Psoas muscle (tissue), 8 donors: ENCODE measurements at regions of chr1 and their contacts with region 1.

Region 1: GRCh38 chr1:161098210-161099068 is at the start of gene KLHDC9:
- DNase-seq: peak; percentile 66 to 87
- ATAC-seq: peak; percentile 76 to 91 (median 85)
- H3K4me3 ChIP-seq: peak within 1 kb of the TSS; percentile 76
- H3K27ac ChIP-seq: peak within 1 kb of the TSS; percentile 58
- H3K4me1 ChIP-seq: peaks cover 7% of the 10 kb centered on the region
- H3K27me3 ChIP-seq: no peaks in the 10 kb centered on the region
- CTCF ChIP-seq: no peak
- total RNA-seq, gene KLHDC9: 1.4 to 5.9 (median 3.5) TPM

Region 2: DNA sequence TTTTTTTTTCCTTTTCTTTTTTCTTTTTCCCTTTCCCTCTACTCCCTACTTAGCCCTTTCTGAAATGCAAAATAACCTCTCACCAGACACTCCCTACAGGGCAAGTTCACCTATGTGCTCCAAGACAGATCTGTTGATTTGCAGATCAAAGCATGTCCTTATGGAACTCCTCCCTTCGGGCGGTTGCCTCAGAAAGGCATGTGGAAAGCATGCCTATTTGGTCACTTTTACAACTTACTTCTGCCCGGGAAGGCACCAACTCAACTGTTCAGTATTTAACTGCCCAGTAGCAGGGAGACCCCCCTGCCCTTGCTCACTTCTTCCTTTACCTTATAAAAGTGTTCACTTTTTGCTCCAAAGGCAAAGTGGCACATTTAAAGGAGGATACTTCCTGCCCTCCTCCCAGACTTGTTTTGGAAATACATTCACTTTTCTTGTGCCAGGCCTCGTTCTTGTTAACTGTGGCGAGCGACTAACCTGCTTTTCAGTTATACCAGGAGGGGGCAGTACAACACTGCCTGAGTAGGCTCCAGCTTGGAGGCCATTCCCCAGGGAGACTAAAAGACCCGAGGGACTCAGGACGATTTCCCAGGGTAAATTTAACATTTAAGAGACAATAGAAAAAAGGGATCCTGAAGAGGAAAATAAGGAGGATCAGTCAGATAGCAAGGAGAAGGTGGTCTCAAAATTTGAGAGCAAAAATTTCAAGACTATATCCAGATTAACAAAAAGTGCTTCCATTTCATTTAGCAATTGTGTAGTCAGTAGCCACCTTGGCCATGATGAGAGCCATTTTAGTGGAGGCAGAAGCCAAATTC is 371.7 kb before region 1 on chr1:
- intact Hi-C with region 1: loop called in 1 of 2 experiments (anchors 10 kb)
- DNase-seq: no peak
- ATAC-seq: no peak
- H3K4me3 ChIP-seq: no peak overlapping the region
- H3K27ac ChIP-seq: no peak overlapping the region
- H3K4me1 ChIP-seq: no peaks in the 10 kb centered on the region
- H3K27me3 ChIP-seq: no peaks in the 10 kb centered on the region
- CTCF ChIP-seq: peak; percentile 54

Region 3: GRCh38 chr1:160830321-160831153 is 267.9 kb before region 1 on chr1:
- intact Hi-C with region 1: loop called in 1 of 2 experiments (anchors 10 kb)
- DNase-seq: peak in 1 of 2 donors; percentile 64
- ATAC-seq: no peak
- H3K4me3 ChIP-seq: no peak overlapping the region
- H3K27ac ChIP-seq: no peak overlapping the region
- H3K4me1 ChIP-seq: no peaks in the 10 kb centered on the region
- H3K27me3 ChIP-seq: no peaks in the 10 kb centered on the region
- CTCF ChIP-seq: peak; percentile 14

Region 4: GRCh38 chr1:160997323-160998038 is 101.0 kb before region 1 on chr1:
- intact Hi-C with region 1: loop called (anchors 2 kb)
- DNase-seq: peak; percentile 33 to 67
- ATAC-seq: peak in 3 of 4 donors; percentile 60 to 76 (median 65)
- H3K4me3 ChIP-seq: no peak overlapping the region
- H3K27ac ChIP-seq: no peak overlapping the region
- H3K4me1 ChIP-seq: no peaks in the 10 kb centered on the region
- H3K27me3 ChIP-seq: no peaks in the 10 kb centered on the region
- CTCF ChIP-seq: peak; percentile 52

Region 5: DNA sequence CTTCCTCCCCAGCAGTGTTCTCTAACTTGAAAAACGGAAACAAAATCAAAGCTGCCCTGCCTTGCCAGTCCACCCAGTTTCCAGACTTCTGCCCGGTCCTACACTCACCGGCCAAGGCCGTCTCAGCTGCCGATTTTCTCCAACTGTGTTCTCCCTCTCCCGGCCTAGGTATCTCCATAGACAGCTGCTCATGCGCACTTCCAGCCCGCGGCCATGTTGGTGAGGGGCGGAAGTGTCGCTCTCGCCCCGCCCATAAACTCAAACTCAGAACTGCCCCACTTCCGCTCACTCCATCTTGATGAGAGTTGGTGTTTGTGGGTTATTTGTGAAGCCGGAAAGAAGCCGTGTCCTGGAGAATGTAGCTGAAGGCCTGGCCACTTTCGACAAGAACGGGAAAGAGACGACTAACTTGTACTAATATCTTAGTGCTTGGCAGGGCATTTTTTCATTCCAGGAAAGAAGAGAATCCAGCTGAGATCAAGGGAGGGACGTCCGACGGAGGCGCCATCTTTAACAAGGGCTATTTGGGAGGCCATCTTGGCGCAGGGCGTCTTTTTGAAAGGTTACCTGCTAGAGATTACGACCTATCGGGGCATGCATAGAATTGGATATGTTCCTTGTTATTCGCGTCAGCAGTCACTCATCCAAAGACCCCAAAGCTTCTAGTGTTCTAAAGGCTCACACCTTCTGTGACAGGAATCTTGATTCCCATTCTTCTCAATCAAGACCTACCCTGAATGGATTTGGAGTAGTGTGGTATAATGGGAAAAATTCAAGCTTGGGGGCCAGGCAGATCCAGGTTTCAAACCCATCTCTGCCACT is 52.5 kb before region 1 on chr1 and contains the start of gene USF1:
- intact Hi-C with region 1: loop called in 1 of 2 experiments (anchors 5 kb)
- DNase-seq: peak; percentile 92 to 96
- ATAC-seq: peak; percentile 98 to 99 (median 98)
- H3K4me3 ChIP-seq: peak within 1 kb of the TSS; percentile 88
- H3K27ac ChIP-seq: peak within 1 kb of the TSS; percentile 91
- H3K4me1 ChIP-seq: peaks cover 16% of the 10 kb centered on the region
- H3K27me3 ChIP-seq: peaks cover 0 to 2% (median 0%) of the 10 kb centered on the region in 3 donors
- CTCF ChIP-seq: no peak
- total RNA-seq, gene USF1: 29.8 to 50.6 (median 37.3) TPM

Region 6: GRCh38 chr1:161351482-161351881 is 253.0 kb after region 1 on chr1:
- intact Hi-C with region 1: no loop called
- DNase-seq: no peak
- ATAC-seq: no peak
- H3K4me3 ChIP-seq: no peak overlapping the region
- H3K27ac ChIP-seq: no peak overlapping the region
- H3K4me1 ChIP-seq: no peaks in the 10 kb centered on the region
- H3K27me3 ChIP-seq: no peaks in the 10 kb centered on the region
- CTCF ChIP-seq: no peak